B cell (primary cell): ENCODE measurements at regions of chr7 and their contacts with region 1.

Region 1: DNA sequence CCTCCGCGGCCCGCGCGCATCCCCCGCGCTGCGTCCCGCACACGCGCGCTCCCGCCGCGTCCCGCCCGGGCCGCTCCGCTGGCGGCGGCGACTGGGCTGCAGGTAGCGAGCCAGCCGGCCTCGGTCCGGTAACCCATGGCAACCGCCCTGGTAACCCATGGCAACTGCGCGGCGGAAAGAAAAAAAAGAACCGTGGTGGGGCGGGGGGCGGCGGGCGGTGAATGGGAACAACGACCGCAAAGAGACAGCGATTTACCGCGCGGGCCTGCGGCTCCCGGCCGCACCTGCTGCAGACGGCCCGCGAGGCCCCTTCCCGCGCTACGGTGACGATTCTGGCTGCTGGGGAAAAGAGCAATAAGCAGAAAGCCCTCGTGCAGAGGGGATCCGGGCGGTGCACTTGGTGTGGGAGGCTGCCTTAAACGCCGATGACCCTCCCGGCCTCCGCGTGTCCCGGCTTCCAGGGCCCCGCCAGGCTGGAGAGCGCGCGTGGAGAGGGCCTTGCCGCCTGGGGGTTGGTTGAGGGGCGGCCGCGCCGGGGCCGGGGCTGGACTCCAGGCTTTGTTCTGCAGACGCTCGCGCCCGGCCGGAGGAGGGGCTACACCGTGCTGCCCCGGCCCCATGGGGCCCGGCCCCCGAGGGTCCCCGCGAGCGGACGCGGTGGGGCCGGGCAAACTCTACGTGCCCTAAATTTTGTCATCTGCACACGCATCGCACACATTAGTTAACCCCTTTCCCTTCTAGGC is 84.7 kb downstream of the SNX10 start:
- DNase-seq: peak; percentile 80
- ATAC-seq: peak; percentile 54
- H3K4me3 ChIP-seq: peak overlapping the region; percentile 34 to 69 (median 58)
- H3K4me3 Mint-ChIP-seq: peak overlapping the region; percentile 87
- H3K27ac ChIP-seq: no peak overlapping the region
- H3K27ac Mint-ChIP-seq: no peak overlapping the region
- H3K4me1 ChIP-seq: peaks cover 8 to 9% of the 10 kb centered on the region in 2 donors
- H3K4me1 Mint-ChIP-seq: peaks cover 6% of the 10 kb centered on the region
- H3K27me3 ChIP-seq: peaks cover 0 to 16% (median 2%) of the 10 kb centered on the region in 4 experiments
- H3K27me3 Mint-ChIP-seq: no peaks in the 10 kb centered on the region
- CTCF ChIP-seq: no peak

Region 2: GRCh38 chr7:26388256-26388655 is 11.9 kb after region 1 on chr7:
- CTCF ChIA-PET with region 1: interaction called, 10 read pairs
- POLR2A ChIA-PET with region 1: no interaction called
- intact Hi-C with region 1: no loop called
- DNase-seq: no peak
- ATAC-seq: no peak
- H3K4me3 ChIP-seq: no peak overlapping the region
- H3K4me3 Mint-ChIP-seq: no peak overlapping the region
- H3K27ac ChIP-seq: no peak overlapping the region
- H3K27ac Mint-ChIP-seq: no peak overlapping the region
- H3K4me1 ChIP-seq: peaks cover 0 to 4% of the 10 kb centered on the region in 2 donors
- H3K4me1 Mint-ChIP-seq: peaks cover 6% of the 10 kb centered on the region
- H3K27me3 ChIP-seq: peaks cover 0 to 9% (median 0%) of the 10 kb centered on the region in 4 experiments
- H3K27me3 Mint-ChIP-seq: peaks cover 17% of the 10 kb centered on the region
- CTCF ChIP-seq: no peak

Region 3: DNA sequence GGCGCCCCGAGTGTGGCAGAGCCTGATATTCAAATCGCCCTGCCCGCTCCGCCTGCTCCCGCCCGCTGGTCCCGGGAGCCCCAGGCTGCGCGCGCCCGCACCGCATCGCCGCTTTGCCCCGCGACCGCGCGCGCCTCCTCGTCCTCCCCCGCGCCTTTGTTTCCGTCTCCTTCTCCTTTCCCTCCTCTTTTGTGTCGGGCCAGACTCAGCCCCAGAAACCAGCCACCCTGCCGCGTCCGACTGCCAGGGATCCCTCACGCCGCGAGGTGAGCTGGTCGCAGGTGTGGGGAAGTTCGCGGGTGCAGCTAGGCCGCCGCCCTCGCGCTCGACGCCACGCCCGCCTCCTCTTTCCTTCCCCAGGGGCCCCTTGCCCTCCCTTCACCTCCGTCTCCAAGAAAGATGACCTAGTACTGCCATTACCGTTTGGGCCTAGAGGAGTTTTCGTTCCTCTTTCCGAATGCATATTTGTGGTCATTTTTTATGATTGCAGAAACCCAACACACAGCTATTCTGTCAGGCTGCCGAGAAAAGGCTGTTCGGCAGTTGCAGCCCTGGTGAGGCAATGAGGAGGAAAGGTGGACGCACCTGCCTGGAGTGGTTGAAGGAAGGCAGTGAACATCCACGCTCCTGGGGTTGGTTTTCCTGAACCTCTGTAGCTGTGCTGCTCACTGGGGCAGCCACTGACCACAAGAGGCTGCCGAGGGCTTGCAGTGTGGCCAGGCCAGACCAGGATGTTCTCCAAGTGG is 22.6 kb after region 1 on chr7:
- CTCF ChIA-PET with region 1: interaction called, 30 read pairs
- POLR2A ChIA-PET with region 1: interaction called, 5 read pairs
- intact Hi-C with region 1: loop called (anchors 1 kb)
- DNase-seq: peak; percentile 95
- ATAC-seq: peak; percentile 86
- H3K4me3 ChIP-seq: peak overlapping the region in 4 of 5 experiments; percentile 50 to 70 (median 64)
- H3K4me3 Mint-ChIP-seq: peak overlapping the region; percentile 99
- H3K27ac ChIP-seq: peak overlapping the region; percentile 79 to 81
- H3K27ac Mint-ChIP-seq: peak overlapping the region; percentile 100
- H3K4me1 ChIP-seq: peaks cover 20 to 28% of the 10 kb centered on the region in 2 donors
- H3K4me1 Mint-ChIP-seq: peaks cover 32% of the 10 kb centered on the region
- H3K27me3 ChIP-seq: peaks cover 0 to 8% (median 0%) of the 10 kb centered on the region in 4 experiments
- H3K27me3 Mint-ChIP-seq: peaks cover 3% of the 10 kb centered on the region
- CTCF ChIP-seq: no peak

Region 4: GRCh38 chr7:26490650-26491624 is 114.6 kb after region 1 on chr7:
- CTCF ChIA-PET with region 1: interaction called, 10 read pairs
- POLR2A ChIA-PET with region 1: no interaction called
- intact Hi-C with region 1: no loop called
- DNase-seq: no peak
- ATAC-seq: no peak
- H3K4me3 ChIP-seq: no peak overlapping the region
- H3K4me3 Mint-ChIP-seq: no peak overlapping the region
- H3K27ac ChIP-seq: no peak overlapping the region
- H3K27ac Mint-ChIP-seq: no peak overlapping the region
- H3K4me1 ChIP-seq: no peaks in the 10 kb centered on the region
- H3K4me1 Mint-ChIP-seq: no peaks in the 10 kb centered on the region
- H3K27me3 ChIP-seq: peaks cover 0 to 19% (median 0%) of the 10 kb centered on the region in 4 experiments
- H3K27me3 Mint-ChIP-seq: peaks cover 18% of the 10 kb centered on the region
- CTCF ChIP-seq: no peak

Region 5: GRCh38 chr7:26500749-26501352 is 124.5 kb after region 1 on chr7:
- CTCF ChIA-PET with region 1: interaction called, 70 read pairs
- POLR2A ChIA-PET with region 1: no interaction called
- intact Hi-C with region 1: loop called (anchors 1 kb)
- DNase-seq: peak; percentile 70
- ATAC-seq: peak; percentile 70
- H3K4me3 ChIP-seq: no peak overlapping the region
- H3K4me3 Mint-ChIP-seq: no peak overlapping the region
- H3K27ac ChIP-seq: no peak overlapping the region
- H3K27ac Mint-ChIP-seq: no peak overlapping the region
- H3K4me1 ChIP-seq: no peaks in the 10 kb centered on the region
- H3K4me1 Mint-ChIP-seq: no peaks in the 10 kb centered on the region
- H3K27me3 ChIP-seq: peaks cover 0 to 6% (median 3%) of the 10 kb centered on the region in 4 experiments
- H3K27me3 Mint-ChIP-seq: peaks cover 33% of the 10 kb centered on the region
- CTCF ChIP-seq: peak; percentile 73

Region 6: GRCh38 chr7:26667500-26668133 is 291.3 kb after region 1 on chr7:
- CTCF ChIA-PET with region 1: interaction called, 165 read pairs
- POLR2A ChIA-PET with region 1: no interaction called
- intact Hi-C with region 1: loop called (anchors 1 kb)
- DNase-seq: peak; percentile 75
- ATAC-seq: peak; percentile 66
- H3K4me3 ChIP-seq: no peak overlapping the region
- H3K4me3 Mint-ChIP-seq: no peak overlapping the region
- H3K27ac ChIP-seq: no peak overlapping the region
- H3K27ac Mint-ChIP-seq: no peak overlapping the region
- H3K4me1 ChIP-seq: peaks cover 0 to 6% of the 10 kb centered on the region in 2 donors
- H3K4me1 Mint-ChIP-seq: peaks cover 18% of the 10 kb centered on the region
- H3K27me3 ChIP-seq: no peaks in the 10 kb centered on the region
- H3K27me3 Mint-ChIP-seq: no peaks in the 10 kb centered on the region
- CTCF ChIP-seq: peak; percentile 77